ENCODE measurements at regions of chr5 and their contacts with region 1.

Region 1: DNA sequence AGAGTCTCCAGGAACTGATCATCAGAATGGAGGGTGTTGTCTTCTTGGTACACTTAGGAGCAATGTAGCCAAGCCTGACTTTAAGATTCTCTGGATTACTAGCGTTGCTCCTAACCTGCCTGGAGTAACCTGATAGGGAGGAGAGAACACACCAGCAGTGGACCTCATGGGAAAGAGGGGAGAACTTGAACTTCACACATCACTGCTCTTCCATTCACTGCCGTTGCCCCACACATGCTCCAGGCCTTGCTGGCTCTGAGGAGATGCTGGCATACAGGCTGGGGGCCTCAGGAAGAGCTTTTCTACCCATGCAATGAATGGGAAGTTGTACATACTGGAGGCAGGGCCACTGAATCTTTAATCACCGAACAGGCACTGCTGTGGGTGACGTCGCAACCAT is 60.3 kb upstream of the ADAMTS16 start:
- DNase-seq: no peak
- ATAC-seq: no peak
- H3K4me3 ChIP-seq: no peak overlapping the region
- H3K27ac ChIP-seq: no peak overlapping the region
- H3K4me1 ChIP-seq: no peaks in the 10 kb centered on the region
- H3K27me3 ChIP-seq: peaks cover 0 to 29% (median 0%) of the 10 kb centered on the region in 7 donors
- CTCF ChIP-seq: no peak

Region 2: DNA sequence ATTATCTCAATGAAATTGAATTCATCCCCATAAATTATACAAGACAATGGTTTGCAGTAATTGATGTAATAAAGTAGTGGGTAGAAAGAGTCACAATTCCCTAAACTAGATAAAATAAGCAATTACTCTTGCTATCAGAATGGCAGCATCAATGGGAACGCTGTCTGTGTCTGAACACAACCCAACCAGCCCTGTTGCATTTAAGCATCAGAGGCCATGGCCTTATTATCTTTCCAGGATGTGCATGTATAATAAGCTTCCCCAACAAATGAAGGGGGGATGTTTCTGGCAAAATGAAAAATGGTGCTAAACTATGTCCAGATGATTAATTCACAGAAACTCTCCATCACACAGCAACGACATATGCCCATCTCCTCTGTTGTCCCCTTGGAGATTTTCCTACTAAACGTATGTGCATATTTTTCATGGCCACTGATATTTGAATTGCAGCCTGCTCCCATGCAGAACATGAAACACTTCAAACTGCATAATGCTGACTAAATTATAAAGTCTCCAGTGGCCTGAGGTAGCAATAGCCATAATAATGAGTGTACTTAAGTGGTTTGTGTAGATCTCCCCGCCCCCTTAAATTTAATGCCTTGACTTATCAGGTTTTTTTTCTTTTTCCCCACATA is 246.7 kb before region 1 on chr5:
- intact Hi-C with region 1: no loop called
- DNase-seq: no peak
- ATAC-seq: no peak
- H3K4me3 ChIP-seq: no peak overlapping the region
- H3K27ac ChIP-seq: no peak overlapping the region
- H3K4me1 ChIP-seq: no peaks in the 10 kb centered on the region
- H3K27me3 ChIP-seq: peaks cover 0 to 2% (median 0%) of the 10 kb centered on the region in 7 donors
- CTCF ChIP-seq: no peak

Region 3: GRCh38 chr5:5063533-5063953 is 16.3 kb before region 1 on chr5:
- intact Hi-C with region 1: loop called in 1 of 10 experiments (anchors 1 kb)
- DNase-seq: no peak
- ATAC-seq: no peak
- H3K4me3 ChIP-seq: no peak overlapping the region
- H3K27ac ChIP-seq: no peak overlapping the region
- H3K4me1 ChIP-seq: peaks cover 0 to 4% (median 0%) of the 10 kb centered on the region in 9 donors
- H3K27me3 ChIP-seq: peaks cover 0 to 8% (median 0%) of the 10 kb centered on the region in 7 donors
- CTCF ChIP-seq: no peak